ENCODE measurements at regions of chr15 and their contacts with region 1.

Region 1: DNA sequence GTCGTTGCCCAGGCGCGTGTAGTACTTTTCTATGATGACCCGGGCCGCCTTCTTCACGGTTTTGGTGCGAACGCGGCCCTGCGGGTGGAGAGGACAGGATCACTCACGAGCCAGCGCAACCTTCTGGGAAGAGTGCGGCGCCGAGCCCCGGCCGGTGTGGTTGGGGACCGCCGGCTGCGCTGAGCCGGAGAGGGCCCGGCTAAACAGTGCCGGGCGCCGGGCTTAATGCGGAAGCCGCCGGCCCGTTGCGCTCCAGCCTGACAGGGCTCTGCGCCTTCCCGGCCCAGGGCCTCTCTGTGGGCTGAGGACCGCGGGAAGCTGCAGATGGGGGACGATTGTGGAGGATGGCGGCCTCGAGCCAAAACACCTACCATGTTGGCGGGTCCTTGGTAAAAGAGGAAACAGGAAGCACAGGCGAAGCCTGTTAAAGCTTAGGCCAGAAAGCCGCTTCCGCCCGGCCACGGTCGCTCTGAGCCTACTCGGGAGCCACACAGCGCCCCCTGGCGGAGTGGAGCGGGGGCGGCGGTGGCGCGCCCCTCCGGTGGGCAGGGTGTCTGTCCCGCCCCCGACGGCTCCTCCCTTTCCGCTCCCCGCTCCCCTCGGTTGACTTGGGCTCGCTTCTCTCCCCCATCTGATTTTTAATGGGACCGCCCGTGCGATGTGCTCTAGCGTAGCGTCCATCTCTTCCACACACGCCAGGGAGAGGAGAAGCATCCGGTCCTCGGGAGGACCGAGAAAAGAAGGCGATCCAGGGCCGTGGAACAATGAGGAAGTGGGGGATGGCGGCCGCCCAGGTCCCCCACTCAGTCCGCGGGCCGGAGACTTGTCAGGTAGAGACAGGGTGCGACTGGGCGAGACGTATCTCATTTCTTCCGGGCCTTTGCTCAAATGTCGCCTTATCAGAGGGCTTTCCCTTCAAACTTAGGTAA is at the start of gene RPS17:
- DNase-seq: peak; percentile 97
- H3K4me3 ChIP-seq: peak within 1 kb of the TSS; percentile 99
- H3K27ac ChIP-seq: peak within 1 kb of the TSS; percentile 79
- H3K4me1 ChIP-seq: peaks cover 4% of the 10 kb centered on the region
- H3K27me3 ChIP-seq: no peaks in the 10 kb centered on the region
- CTCF ChIP-seq: peak; percentile 100
- total RNA-seq, gene RPS17: 909 to 1,247 TPM

Region 2: DNA sequence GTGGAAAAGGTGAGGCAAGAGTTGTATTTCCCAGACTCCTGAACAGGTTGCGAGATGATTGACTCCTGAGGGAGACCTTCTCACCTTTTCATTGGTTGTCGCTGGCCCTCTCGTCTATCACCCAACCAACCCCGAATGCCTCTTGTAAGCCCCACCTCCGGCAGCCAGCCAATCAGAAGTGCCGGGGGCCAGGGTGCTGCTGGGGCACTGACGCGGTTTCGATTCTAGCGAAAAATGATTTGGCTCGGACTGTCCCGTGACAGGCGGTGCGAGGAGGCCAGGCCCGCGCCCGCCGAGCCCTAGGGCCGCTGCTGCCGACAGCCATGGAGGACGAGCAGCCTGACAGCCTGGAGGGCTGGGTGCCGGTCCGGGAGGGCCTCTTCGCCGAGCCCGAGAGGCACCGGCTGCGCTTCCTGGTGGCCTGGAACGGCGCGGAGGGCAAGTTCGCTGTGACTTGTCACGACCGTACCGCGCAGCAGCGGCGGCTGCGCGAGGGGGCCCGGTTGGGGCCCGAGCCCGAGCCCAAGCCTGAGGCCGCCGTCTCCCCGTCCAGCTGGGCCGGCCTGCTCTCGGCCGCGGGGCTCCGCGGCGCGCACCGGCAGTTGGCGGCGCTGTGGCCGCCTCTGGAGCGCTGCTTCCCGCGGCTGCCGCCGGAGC is 269.2 kb after region 1 on chr15 and contains the start of gene WHAMM:
- intact Hi-C with region 1: loop called (anchors 10 kb)
- DNase-seq: peak; percentile 99
- H3K4me3 ChIP-seq: peak within 1 kb of the TSS; percentile 77
- H3K27ac ChIP-seq: peak within 1 kb of the TSS; percentile 100
- H3K4me1 ChIP-seq: no peaks in the 10 kb centered on the region
- H3K27me3 ChIP-seq: no peaks in the 10 kb centered on the region
- CTCF ChIP-seq: no peak
- total RNA-seq, gene WHAMM: 11.9 to 13.1 TPM